GM13977 (cell line): ENCODE measurements at regions of chr7 and their contacts with region 1.

Region 1: GRCh38 chr7:87129848-87130247 is 22.4 kb upstream of the DMTF1 start:
- DNase-seq: no peak
- CTCF ChIP-seq: no peak

Region 2: GRCh38 chr7:87003872-87004798 is 125.7 kb before region 1 on chr7:
- in situ Hi-C with region 1: no loop called
- DNase-seq: no peak
- CTCF ChIP-seq: no peak

Region 3: GRCh38 chr7:87075671-87076404 is 54.0 kb before region 1 on chr7:
- in situ Hi-C with region 1: loop called (anchors 10 kb)
- DNase-seq: peak; percentile 18
- CTCF ChIP-seq: no peak